Caco-2 (cell line): ENCODE measurements at regions of chr7 and their contacts with region 1.

Region 1: GRCh38 chr7:90690159-90690858 is 94.2 kb downstream of the CDK14 start:
- DNase-seq: no peak
- H3K4me3 ChIP-seq: no peak overlapping the region
- H3K4me3 Mint-ChIP-seq: no peak overlapping the region
- H3K27ac Mint-ChIP-seq: no peak overlapping the region
- H3K4me1 ChIP-seq: peaks cover 34% of the 10 kb centered on the region
- H3K4me1 Mint-ChIP-seq: peaks cover 25% of the 10 kb centered on the region
- H3K27me3 ChIP-seq: no peaks in the 10 kb centered on the region
- H3K27me3 Mint-ChIP-seq: no peaks in the 10 kb centered on the region
- CTCF ChIP-seq: peak in 1 of 2 experiments; percentile 2

Region 2: GRCh38 chr7:90720984-90721760 is 30.9 kb after region 1 on chr7:
- CTCF ChIA-PET with region 1: no interaction called
- POLR2A ChIA-PET with region 1: no interaction called
- intact Hi-C with region 1: loop called (anchors 2 kb)
- DNase-seq: peak; percentile 89 to 92
- H3K4me3 ChIP-seq: no peak overlapping the region
- H3K4me3 Mint-ChIP-seq: peak overlapping the region; percentile 30
- H3K27ac Mint-ChIP-seq: peak overlapping the region; percentile 87
- H3K4me1 ChIP-seq: peaks cover 62% of the 10 kb centered on the region
- H3K4me1 Mint-ChIP-seq: peaks cover 37% of the 10 kb centered on the region
- H3K27me3 ChIP-seq: no peaks in the 10 kb centered on the region
- H3K27me3 Mint-ChIP-seq: no peaks in the 10 kb centered on the region
- CTCF ChIP-seq: no peak